PC-9 (cell line): ENCODE measurements at regions of chr5 and their contacts with region 1.

Region 1: DNA sequence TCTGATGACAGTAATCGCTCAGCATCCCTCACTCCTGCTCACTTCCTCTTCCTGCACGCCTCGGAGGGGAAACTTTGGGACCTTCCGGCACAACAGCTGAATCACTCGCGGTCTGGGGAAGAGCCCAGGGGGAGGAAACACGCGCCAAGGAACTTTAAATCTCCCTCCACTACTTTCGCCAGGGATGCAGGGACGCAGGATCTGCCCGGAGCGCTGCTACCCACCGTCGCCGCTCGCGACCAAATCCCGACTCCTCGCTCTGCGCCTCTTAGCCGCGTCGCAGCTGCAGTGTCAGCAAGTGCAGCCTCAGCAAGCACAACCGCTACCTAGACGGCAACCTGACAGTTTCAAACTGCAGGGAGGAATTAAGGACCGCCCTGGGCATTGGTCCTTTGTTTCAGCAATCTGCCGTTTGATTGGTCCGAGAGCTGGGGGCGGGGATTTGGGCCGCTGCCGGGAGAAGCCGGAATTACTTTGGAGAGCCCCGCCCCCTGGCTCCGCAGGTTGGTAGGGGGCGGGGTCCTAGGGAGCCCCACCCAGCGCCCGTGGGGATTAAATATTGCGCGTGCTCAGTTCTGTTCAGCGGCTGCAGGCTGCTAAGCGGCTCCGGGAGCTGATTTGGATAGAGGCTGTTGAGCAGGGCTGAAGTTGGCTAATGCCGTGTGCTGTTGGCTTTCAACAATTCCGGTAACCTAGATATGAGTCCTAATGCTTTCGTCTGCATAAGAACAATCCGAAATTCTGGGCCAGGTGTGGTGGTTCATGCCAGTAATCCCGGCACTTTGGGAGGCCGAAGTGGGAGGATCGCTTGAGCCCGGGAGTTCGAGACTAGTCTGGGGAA is at the start of gene POC5:
- DNase-seq: peak; percentile 94 to 98
- H3K4me3 ChIP-seq: peak within 1 kb of the TSS; percentile 72
- H3K27ac ChIP-seq: peak within 1 kb of the TSS; percentile 55
- H3K4me1 ChIP-seq: peaks cover 12% of the 10 kb centered on the region
- H3K27me3 ChIP-seq: no peaks in the 10 kb centered on the region
- CTCF ChIP-seq: no peak
- total RNA-seq, gene POC5: 11.2 and 13.1 TPM in 2 replicates

Region 2: GRCh38 chr5:75037135-75037534 is 680.2 kb before region 1 on chr5:
- CTCF ChIA-PET with region 1: no interaction called
- POLR2A ChIA-PET with region 1: interaction called, 11 read pairs
- intact Hi-C with region 1: no loop called
- DNase-seq: peak; percentile 85 to 99
- H3K4me3 ChIP-seq: no peak overlapping the region; the same call in 1 of the 2 replicates
- H3K27ac ChIP-seq: peak overlapping the region; percentile 88
- H3K4me1 ChIP-seq: peaks cover 48% of the 10 kb centered on the region
- H3K27me3 ChIP-seq: no peaks in the 10 kb centered on the region
- CTCF ChIP-seq: no peak

Region 3: DNA sequence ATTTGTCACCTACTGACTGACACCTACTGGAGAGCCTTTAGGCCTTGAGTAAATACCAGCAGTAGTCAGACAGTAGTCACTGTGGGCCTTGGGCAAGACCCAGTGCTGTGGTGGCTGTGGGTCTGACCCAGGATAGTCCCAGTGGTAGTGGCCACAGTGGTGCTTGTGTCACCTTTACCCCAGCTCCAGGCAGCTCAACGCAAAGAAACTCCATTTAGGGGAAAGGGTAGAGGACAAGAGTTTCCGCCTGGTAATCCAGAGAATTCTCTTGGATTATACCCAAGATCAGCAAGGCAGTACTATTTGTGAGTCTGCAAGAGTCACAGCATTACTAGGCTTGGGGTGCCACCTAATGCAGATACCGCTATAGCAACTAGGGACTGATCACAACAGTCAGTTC is 234.8 kb before region 1 on chr5:
- CTCF ChIA-PET with region 1: no interaction called
- POLR2A ChIA-PET with region 1: interaction called, 48 read pairs
- intact Hi-C with region 1: no loop called
- DNase-seq: no peak
- H3K4me3 ChIP-seq: no peak overlapping the region
- H3K27ac ChIP-seq: no peak overlapping the region
- H3K4me1 ChIP-seq: no peaks in the 10 kb centered on the region
- H3K27me3 ChIP-seq: no peaks in the 10 kb centered on the region
- CTCF ChIP-seq: no peak

Region 4: GRCh38 chr5:76144513-76145274 is 427.4 kb after region 1 on chr5:
- CTCF ChIA-PET with region 1: no interaction called
- POLR2A ChIA-PET with region 1: interaction called, 12 read pairs
- intact Hi-C with region 1: no loop called
- DNase-seq: no peak
- H3K4me3 ChIP-seq: no peak overlapping the region
- H3K27ac ChIP-seq: no peak overlapping the region
- H3K4me1 ChIP-seq: no peaks in the 10 kb centered on the region
- H3K27me3 ChIP-seq: peaks cover 9% of the 10 kb centered on the region; the same call in 1 of the 2 replicates
- CTCF ChIP-seq: no peak